Posterior cingulate gyrus (tissue), 11 donors: ENCODE measurements at regions of chr6 and their contacts with region 1.

Region 1: GRCh38 chr6:151475653-151476523 is 17.9 kb upstream of the CCDC170 start:
- DNase-seq: peak in 1 of 10 donors; percentile 34

Region 2: DNA sequence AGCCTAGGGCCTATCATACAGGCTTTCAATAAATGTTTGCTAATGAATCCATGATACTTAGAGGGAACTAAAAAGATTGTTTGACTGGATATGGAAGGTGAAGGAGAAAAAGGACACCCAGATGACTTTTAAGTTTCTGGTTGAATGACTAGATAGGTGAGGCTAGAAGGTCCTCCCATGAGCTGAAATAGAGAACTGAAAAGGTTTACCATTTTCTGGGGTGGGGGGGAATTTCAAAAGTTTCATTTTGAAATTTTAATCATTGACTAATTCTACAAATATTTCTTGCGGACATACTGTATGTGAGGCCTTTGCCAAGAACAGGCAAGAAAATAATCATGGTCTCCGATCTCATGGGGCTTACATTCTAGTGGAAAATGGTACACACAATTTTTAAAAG is 66.6 kb before region 1 on chr6:
- intact Hi-C with region 1: loop called (anchors 1 kb)
- DNase-seq: no peak

Region 3: DNA sequence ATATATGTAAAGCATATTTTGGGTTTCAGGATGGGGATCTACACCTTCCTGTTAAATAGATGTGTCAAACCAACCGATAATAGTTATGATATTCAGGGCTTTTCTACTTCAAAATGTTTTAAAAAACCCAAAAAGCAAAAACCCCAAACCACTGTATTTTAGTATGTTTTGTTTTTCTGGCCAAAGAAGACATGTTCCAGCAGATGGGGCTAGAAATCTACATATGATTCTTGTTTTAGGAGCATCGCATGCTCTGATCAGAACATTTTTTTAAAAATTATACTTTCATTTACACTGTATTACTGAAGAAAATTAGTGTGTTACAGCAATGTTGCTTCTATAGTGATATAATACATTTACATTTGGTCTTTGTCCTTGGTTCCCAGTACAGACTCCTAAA is 35.0 kb before region 1 on chr6:
- intact Hi-C with region 1: loop called (anchors 5 kb)
- DNase-seq: no peak